Psoas muscle (tissue), 8 donors: ENCODE measurements at regions of chr15 and their contacts with region 1.

Region 1: DNA sequence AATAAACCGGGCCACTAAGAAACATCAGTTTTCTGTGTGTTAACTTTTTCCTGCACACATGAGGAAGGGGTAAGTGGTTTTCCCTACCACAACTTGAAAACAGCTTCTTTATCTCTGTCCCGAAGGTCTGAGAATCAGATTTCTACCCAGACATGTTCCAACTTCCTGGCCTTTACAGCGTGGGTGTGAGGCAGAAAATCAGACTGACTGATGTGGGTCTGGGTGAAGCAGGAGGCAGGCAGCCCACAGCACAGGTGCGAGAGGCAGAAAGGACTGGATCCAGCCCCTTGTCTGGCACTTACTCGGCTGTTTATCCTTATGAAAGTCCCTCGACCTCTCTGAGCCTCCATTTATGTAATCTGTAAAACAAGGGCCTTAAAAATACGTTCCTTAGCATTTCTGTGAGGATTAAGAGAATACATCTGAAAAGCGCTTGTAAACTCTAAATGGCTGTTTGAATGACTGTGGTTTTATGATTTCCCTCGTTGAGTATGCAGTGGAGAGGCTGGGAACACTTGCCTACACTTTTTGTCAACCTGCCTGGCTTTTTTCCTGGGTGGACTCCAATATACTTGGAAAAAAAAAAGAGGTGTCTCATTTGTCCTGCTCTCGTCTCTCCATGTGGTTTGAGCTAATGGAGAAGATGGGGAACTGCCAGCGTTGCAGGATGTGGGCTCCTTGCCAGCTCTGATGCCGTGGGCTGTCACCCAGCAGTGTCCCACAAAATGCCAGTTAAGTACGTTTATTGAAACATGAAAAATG is 3.1 kb downstream of the AGBL1 start:
- DNase-seq: peak in 1 of 2 donors; percentile 34
- ATAC-seq: peak in 1 of 4 donors; percentile 19
- H3K4me3 ChIP-seq: peak overlapping the region; percentile 45
- H3K27ac ChIP-seq: peak overlapping the region; percentile 69
- H3K4me1 ChIP-seq: peaks cover 52% of the 10 kb centered on the region
- H3K27me3 ChIP-seq: no peaks in the 10 kb centered on the region
- CTCF ChIP-seq: no peak

Region 2: DNA sequence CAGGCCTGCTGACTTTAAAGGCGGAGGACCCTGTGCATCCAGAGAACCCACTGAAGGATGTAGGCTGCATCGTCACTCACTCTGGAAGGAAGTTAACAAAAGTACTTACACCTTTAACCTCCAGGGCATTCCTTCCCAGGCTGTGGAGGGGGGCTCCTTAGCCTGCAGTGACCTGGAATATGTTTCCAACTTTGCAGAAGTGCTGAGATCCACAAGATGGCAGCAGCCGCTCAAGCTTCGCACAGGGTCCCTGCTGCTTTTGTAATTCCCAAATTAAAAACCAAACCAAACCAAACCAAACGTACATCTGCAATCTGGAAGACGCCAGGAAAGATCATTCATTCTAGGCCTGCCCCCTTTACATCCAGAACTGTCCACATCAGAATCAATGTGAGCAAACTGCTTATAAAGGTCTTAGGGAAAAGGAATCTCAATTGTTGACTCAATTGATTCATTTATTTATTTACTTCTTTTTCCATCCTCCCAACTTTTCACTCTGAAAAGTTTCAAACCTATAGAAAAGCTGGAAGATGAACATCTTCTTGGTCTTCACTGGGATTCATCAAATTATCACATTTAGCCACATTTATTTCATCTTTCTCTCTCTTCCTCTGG is 217.6 kb before region 1 on chr15:
- intact Hi-C with region 1: loop called in 1 of 2 experiments (anchors 10 kb)
- DNase-seq: peak in 1 of 2 donors; percentile 25
- ATAC-seq: peak; percentile 56 to 90 (median 76)
- H3K4me3 ChIP-seq: no peak overlapping the region
- H3K27ac ChIP-seq: no peak overlapping the region
- H3K4me1 ChIP-seq: no peaks in the 10 kb centered on the region
- H3K27me3 ChIP-seq: no peaks in the 10 kb centered on the region
- CTCF ChIP-seq: peak; percentile 66

Region 3: DNA sequence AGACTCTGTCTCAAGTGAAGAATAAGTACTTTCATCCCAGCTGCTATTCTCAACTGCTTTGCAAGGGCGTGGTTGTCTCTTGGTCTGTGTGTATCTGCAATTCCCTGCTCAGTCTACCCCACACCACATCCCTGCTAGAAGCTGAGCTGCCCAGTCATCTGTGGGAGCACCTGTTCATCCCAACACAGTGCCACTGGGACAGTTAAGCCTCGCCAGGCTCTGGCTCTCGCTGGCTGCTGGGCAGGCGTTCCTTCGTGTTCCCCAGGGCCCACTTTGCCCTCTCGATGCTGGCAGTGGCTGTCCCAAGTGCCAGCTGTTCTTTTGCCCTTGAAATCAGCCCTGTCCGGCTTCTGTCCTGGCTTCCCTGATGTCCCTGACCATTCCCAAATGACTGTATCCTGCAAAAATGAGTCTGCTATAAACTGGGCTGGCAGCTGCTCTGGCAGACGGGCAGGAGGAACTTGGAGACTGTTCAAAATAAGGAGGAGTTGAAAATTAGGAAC is 196.4 kb before region 1 on chr15:
- intact Hi-C with region 1: loop called in 1 of 2 experiments (anchors 5 kb)
- DNase-seq: peak; percentile 70 to 89
- ATAC-seq: peak; percentile 97 to 99 (median 98)
- H3K4me3 ChIP-seq: no peak overlapping the region
- H3K27ac ChIP-seq: peak overlapping the region; percentile 74
- H3K4me1 ChIP-seq: peaks cover 12% of the 10 kb centered on the region
- H3K27me3 ChIP-seq: no peaks in the 10 kb centered on the region
- CTCF ChIP-seq: no peak

Region 4: DNA sequence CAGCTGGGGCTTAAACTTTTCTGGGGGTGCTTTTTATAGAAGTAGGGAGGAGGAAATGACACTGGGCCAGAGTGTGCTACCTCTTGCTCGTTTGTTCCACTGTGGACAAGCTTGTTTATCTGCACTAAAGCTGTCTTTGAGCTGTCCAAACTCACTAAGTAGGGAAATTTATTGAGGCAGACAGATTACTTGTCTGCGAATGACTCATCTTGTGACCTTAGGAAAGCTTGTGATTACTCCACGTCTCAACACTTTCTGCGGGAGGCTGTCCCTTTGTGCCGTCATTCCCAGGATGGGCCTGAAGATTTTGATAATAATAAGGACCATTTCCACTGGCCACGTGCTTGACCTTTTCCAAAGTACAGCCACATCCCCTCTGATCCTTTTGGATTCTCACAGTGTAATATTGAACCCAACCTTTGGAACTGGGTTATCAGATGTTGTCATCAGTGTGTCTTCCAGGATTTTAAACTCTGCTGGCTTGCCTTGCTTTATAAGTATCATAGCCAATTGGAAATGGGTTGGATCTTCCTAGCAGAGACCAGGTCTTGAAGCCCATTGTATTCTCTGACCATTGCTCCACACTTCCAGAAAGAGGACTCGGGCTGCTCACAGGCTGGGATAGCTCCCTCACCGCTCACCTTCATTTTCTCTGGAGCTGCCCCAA is 81.6 kb after region 1 on chr15:
- intact Hi-C with region 1: loop called in 1 of 2 experiments (anchors 1 kb)
- DNase-seq: peak; percentile 60 to 66
- ATAC-seq: peak; percentile 65 to 78 (median 74)
- H3K4me3 ChIP-seq: no peak overlapping the region
- H3K27ac ChIP-seq: peak overlapping the region; percentile 92
- H3K4me1 ChIP-seq: peaks cover 64% of the 10 kb centered on the region
- H3K27me3 ChIP-seq: no peaks in the 10 kb centered on the region
- CTCF ChIP-seq: no peak